Right cardiac atrium (tissue), 5 donors: ENCODE measurements at regions of chr13 and their contacts with region 1.

Region 1: GRCh38 chr13:51286135-51287002 is 53.1 kb upstream of the SERPINE3 start:
- DNase-seq: peak; percentile 80 to 94 (median 92)
- ATAC-seq: peak; percentile 89 to 92
- H3K4me3 ChIP-seq: no peak overlapping the region
- H3K27ac ChIP-seq: no peak overlapping the region
- H3K4me1 ChIP-seq: no peaks in the 10 kb centered on the region
- H3K27me3 ChIP-seq: no peaks in the 10 kb centered on the region

Region 2: GRCh38 chr13:51148952-51149573 is 137.3 kb before region 1 on chr13:
- intact Hi-C with region 1: loop called (anchors 2 to 5 kb)
- DNase-seq: peak in 1 of 3 donors; percentile 45
- ATAC-seq: peak; percentile 63 to 73
- H3K4me3 ChIP-seq: no peak overlapping the region
- H3K27ac ChIP-seq: no peak overlapping the region
- H3K4me1 ChIP-seq: no peaks in the 10 kb centered on the region
- H3K27me3 ChIP-seq: no peaks in the 10 kb centered on the region

Region 3: GRCh38 chr13:51154029-51154555 is 132.3 kb before region 1 on chr13:
- intact Hi-C with region 1: loop called (anchors 2 to 5 kb)
- DNase-seq: no peak
- ATAC-seq: peak; percentile 26 to 56
- H3K4me3 ChIP-seq: no peak overlapping the region
- H3K27ac ChIP-seq: no peak overlapping the region
- H3K4me1 ChIP-seq: no peaks in the 10 kb centered on the region
- H3K27me3 ChIP-seq: no peaks in the 10 kb centered on the region

Region 4: DNA sequence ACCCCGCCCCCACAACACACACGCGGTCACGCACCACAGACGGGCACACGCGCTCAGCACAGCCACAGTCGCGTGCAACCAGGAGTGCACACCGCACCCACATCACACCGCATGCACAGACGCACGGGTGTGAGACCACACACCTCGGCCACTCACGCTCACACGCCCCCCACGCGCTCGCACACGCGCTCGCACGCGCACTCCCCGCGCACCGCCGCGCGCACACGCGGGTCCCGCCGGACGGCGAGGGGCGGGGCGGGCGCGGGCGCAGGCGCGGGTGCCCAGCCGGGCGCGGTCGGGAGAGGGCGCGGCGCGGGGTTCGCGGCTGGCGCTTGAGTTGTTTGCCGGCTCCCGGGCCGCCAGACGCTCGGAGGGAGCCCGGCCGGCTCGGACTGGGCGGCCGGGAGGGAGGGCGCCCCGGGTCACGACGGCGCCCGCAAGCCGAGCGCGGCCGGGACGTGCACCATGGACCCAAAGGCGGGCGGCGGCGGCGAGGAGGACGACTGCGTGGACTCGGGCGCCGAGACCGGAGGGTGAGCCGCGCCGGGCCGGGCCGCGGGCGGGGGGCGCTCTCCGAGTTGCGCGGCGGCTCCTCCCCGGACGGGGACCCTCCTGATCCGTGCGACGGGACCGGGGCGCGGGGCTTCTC is 64.2 kb before region 1 on chr13 and contains the start of gene FAM124A:
- intact Hi-C with region 1: loop called (anchors 5 kb)
- DNase-seq: peak; percentile 62 to 82 (median 81)
- ATAC-seq: peak; percentile 83 to 90
- H3K4me3 ChIP-seq: peak within 1 kb of the TSS; percentile 88
- H3K27ac ChIP-seq: peak within 1 kb of the TSS; percentile 7
- H3K4me1 ChIP-seq: no peaks in the 10 kb centered on the region
- H3K27me3 ChIP-seq: no peaks in the 10 kb centered on the region
- total RNA-seq, gene FAM124A: 5.5 to 10.7 (median 8.6) TPM